Endothelial cell of umbilical vein (primary cell): ENCODE measurements at regions of chr11 and their contacts with region 1.

Region 1: DNA sequence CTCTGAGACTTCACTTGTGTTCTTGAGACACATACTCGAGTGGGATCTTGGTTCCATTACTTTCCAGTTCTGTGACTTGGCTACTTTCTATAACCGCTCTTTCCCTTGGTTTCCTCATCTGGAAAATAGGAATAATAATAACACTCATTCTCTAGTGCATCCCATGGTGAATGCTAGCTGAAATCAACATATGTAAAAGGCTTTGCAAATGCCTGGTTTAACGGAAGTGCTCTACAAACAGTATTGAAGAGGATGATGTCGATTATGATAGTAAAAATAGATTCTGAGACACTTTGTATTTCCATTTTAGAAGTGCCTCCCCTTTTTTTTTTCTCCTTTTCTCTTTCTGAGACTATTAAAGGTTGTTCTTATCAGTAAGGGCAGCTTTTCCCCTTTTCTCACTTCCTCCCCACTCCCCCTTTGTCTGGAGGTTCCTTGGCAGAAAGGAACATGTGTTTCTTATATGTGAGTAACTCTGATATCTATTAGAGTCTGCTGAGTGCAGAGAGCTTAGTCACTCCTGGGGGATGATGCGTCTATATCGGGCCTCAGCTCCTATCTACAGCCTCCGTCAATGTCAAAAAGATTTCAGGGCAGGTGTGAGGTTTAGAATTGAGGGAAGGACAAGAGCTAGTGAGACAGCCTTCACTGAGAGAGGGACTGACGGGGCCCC is 489.3 kb downstream of the NTM start:
- DNase-seq: peak; percentile 90
- H3K4me3 ChIP-seq: no peak overlapping the region
- H3K27ac ChIP-seq: peak overlapping the region; percentile 93
- H3K4me1 ChIP-seq: peaks cover 54% of the 10 kb centered on the region
- H3K27me3 ChIP-seq: no peaks in the 10 kb centered on the region
- CTCF ChIP-seq: no peak
- POLR2A ChIP-seq: no peak

Region 2: GRCh38 chr11:131760091-131761061 is 99.3 kb before region 1 on chr11:
- CTCF ChIA-PET with region 1: no interaction called
- POLR2A ChIA-PET with region 1: no interaction called
- dilution Hi-C with region 1: loop called (anchors 5 kb)
- intact Hi-C with region 1: no loop called
- DNase-seq: no peak
- H3K4me3 ChIP-seq: no peak overlapping the region
- H3K27ac ChIP-seq: peak overlapping the region; percentile 23
- H3K4me1 ChIP-seq: peaks cover 13% of the 10 kb centered on the region
- H3K27me3 ChIP-seq: no peaks in the 10 kb centered on the region
- CTCF ChIP-seq: no peak
- POLR2A ChIP-seq: no peak

Region 3: DNA sequence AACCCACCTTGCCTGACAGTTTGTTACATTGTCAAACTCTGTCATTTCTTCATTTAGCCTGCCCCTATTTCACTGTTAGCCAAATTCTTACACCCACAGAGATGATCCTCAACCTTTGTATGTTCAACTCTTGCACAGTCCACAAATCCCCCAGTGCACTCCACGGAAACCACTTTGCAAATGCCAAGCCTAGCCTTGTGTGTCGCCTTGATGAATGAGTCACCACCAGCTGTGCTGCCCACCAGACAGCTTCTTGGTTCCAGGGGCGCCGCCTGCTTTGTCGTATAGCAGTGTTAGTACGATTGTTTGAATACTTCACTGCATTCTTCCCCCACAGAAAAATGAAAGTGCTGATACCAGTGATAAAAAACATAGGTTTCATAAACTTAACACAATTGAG is 197.0 kb after region 1 on chr11:
- CTCF ChIA-PET with region 1: no interaction called
- POLR2A ChIA-PET with region 1: no interaction called
- dilution Hi-C with region 1: no loop called
- intact Hi-C with region 1: no loop called
- DNase-seq: no peak
- H3K4me3 ChIP-seq: no peak overlapping the region
- H3K27ac ChIP-seq: no peak overlapping the region
- H3K4me1 ChIP-seq: peaks cover 21% of the 10 kb centered on the region
- H3K27me3 ChIP-seq: no peaks in the 10 kb centered on the region
- CTCF ChIP-seq: no peak
- POLR2A ChIP-seq: no peak